Ascending aorta (tissue), 2 donors: ENCODE measurements at regions of chr16 and their contacts with region 1.

Region 1: GRCh38 chr16:3457434-3458252 is 14.2 kb downstream of the NAA60 start:
- DNase-seq: peak; percentile 33 to 90
- H3K4me3 ChIP-seq: peak overlapping the region; percentile 72 to 73
- H3K27ac ChIP-seq: peak overlapping the region; percentile 92
- H3K4me1 ChIP-seq: peaks cover 8 to 17% of the 10 kb centered on the region in 2 donors
- H3K27me3 ChIP-seq: no peaks in the 10 kb centered on the region
- CTCF ChIP-seq: peak; percentile 38 to 48 (median 44)

Region 2: GRCh38 chr16:2656985-2657384 is 800.7 kb before region 1 on chr16:
- intact Hi-C with region 1: no loop called
- DNase-seq: no peak
- H3K4me3 ChIP-seq: no peak overlapping the region
- H3K27ac ChIP-seq: no peak overlapping the region
- H3K4me1 ChIP-seq: no peaks in the 10 kb centered on the region
- H3K27me3 ChIP-seq: no peaks in the 10 kb centered on the region
- CTCF ChIP-seq: no peak

Region 3: GRCh38 chr16:3150346-3151218 is 307.1 kb before region 1 on chr16:
- intact Hi-C with region 1: loop called (anchors 5 kb)
- DNase-seq: peak; percentile 89 to 98
- H3K4me3 ChIP-seq: peak overlapping the region; percentile 76
- H3K27ac ChIP-seq: peak overlapping the region; percentile 82 to 86
- H3K4me1 ChIP-seq: peaks cover 0 to 15% of the 10 kb centered on the region in 2 donors
- H3K27me3 ChIP-seq: no peaks in the 10 kb centered on the region
- CTCF ChIP-seq: no peak

Region 4: GRCh38 chr16:3182608-3183444 is 274.8 kb before region 1 on chr16:
- intact Hi-C with region 1: no loop called
- DNase-seq: no peak
- H3K4me3 ChIP-seq: peak overlapping the region; percentile 28 to 47
- H3K27ac ChIP-seq: no peak overlapping the region
- H3K4me1 ChIP-seq: peaks cover 3 to 4% of the 10 kb centered on the region in 2 donors
- H3K27me3 ChIP-seq: peaks cover 10% of the 10 kb centered on the region
- CTCF ChIP-seq: peak in 1 of 3 experiments; percentile 21

Region 5: DNA sequence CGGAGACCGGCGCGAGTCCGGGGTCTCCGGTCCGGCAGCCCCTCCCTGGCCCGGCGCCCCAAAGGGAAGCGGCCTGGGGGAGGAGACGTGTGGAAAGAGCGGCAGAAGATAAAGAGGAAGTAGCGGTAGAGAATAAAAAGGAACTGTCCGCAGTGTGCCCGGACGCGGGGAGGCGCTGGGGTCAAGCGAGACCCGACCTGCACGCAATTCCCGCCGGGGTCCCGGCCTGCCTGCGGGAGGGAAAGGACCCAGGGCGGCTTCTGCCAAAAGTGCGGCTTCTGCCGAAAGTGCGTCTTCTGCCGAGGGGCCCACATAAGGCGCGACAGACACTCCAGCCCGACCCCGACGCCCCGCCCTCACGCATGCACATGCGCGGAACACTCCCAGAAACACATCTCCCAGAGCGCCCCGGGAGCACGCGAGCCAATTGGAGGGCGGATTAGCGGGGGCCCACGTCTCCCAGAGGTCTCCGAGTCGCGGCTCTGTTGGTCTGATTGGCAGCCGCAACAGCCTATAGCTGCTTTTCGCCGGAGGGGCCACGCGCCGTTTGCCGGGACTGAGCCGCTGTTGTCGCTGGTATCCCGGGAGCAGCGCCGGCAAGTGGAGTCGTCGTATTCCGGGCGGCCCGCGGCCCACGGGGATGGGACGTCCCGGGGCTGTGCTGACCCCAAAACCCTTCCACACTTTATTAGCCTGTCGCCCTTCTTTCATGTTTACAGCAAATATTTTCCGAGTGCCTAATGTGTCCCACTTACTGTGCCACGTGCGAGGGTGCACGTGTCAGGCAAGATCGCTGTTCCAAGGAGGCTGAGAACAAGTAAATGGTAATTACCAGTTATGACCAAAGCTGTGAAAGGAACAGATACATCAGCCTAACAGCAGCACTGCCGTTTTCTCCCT is 193.3 kb before region 1 on chr16:
- intact Hi-C with region 1: loop called (anchors 1 kb)
- DNase-seq: peak; percentile 90 to 98
- H3K4me3 ChIP-seq: peak overlapping the region; percentile 56 to 66
- H3K27ac ChIP-seq: peak overlapping the region; percentile 89 to 94
- H3K4me1 ChIP-seq: peaks cover 0 to 10% of the 10 kb centered on the region in 2 donors
- H3K27me3 ChIP-seq: no peaks in the 10 kb centered on the region
- CTCF ChIP-seq: peak in 1 of 3 experiments; percentile 33

Region 6: DNA sequence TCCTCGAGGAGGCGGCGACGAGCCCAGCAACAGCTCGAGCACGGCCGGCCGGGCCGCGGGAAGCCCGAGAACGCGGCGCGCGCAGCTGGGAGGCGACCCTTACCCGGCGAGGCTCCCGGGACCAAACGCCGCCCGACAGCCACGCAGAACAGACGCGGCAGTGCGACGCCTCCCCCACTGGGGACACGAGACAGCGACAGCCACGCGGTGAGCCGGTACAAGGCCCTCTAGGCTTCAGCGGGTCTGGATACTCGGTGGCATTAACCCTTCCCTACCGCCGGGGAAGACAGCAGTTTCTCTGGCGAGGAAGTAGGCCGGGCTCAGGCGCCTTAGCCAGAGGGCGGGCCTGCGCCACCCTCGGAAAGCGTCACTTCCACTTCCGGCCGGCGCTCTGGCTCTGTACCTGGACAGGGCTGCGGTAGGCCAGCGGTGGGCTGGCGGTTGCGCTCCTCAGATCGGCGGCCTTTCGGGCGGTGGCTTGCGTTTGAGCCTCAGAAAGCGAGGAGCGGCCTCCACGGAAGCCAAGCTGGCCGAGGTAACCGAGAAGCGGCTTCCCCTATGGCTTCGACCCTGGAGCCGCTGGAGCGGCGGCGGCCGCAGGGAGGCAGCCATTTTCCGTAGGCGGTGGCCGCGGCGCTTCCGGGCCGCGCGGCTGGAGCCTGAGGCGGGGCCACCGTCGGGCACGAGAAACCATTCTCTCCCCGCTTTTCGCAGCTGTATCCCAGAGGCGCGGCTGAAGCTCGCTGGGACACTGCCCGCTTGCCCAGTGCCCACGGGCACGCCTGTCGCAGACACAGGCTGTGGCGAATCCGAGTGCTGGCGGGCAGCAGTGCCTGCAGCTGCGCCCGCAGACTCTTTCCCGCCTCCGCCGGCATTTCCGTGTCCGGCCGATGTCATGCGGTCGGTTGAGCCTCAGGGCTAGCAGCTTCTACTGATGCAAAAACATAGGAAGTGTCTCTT is 152.3 kb before region 1 on chr16 and contains the starts of genes TIGD7 and ZNF75A:
- intact Hi-C with region 1: loop called (anchors 5 kb)
- DNase-seq: peak in 1 of 2 donors; percentile 92
- H3K4me3 ChIP-seq: peak within 1 kb of the TSS; percentile 67 to 88
- H3K27ac ChIP-seq: peak within 1 kb of the TSS; percentile 93
- H3K4me1 ChIP-seq: peaks cover 0 to 7% of the 10 kb centered on the region in 2 donors
- H3K27me3 ChIP-seq: no peaks in the 10 kb centered on the region
- CTCF ChIP-seq: peak in 2 of 3 experiments; percentile 22 to 39
- total RNA-seq, gene TIGD7: 1.6 TPM
- total RNA-seq, gene ZNF75A: 8.3 TPM

Region 7: GRCh38 chr16:3443108-3444031 is 14.3 kb before region 1 on chr16 and contains the starts of genes NAA60 and ZNF597:
- intact Hi-C with region 1: loop called (anchors 1 kb)
- DNase-seq: peak; percentile 38 to 90
- H3K4me3 ChIP-seq: peak within 1 kb of the TSS; percentile 53 to 83
- H3K27ac ChIP-seq: peak within 1 kb of the TSS; percentile 75 to 79
- H3K4me1 ChIP-seq: no peaks in the 10 kb centered on the region
- H3K27me3 ChIP-seq: no peaks in the 10 kb centered on the region
- CTCF ChIP-seq: no peak
- total RNA-seq, gene NAA60: 74.6 TPM
- total RNA-seq, gene ZNF597: 0.21 TPM

Region 8: DNA sequence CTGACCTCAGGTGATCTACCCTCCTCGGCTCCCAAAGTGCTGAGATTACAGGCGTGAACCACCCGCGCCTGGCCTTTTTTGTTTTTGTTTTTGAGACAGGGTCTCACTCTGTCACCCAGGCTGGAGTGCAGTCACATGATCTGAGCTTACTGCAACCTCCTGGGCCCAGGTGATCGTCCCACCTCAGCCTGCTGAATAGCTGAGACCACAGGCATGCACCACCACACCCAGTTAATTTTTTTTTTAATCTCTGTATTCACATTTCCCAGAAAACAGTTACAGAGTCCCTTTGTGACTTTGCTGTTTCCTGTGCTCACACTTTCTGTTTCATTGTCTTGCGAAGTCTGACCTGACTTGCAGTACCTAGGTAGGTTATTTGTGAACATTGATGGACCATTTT is 45.9 kb after region 1 on chr16:
- intact Hi-C with region 1: loop called (anchors 2 kb)
- DNase-seq: no peak
- H3K4me3 ChIP-seq: no peak overlapping the region
- H3K27ac ChIP-seq: no peak overlapping the region
- H3K4me1 ChIP-seq: peaks cover 4% of the 10 kb centered on the region in 2 donors
- H3K27me3 ChIP-seq: no peaks in the 10 kb centered on the region
- CTCF ChIP-seq: no peak